Activated CD4-positive, alpha-beta T cell treated with anti-CD3 and anti-CD28 coated beads for 36 hours (primary cell): ENCODE measurements at regions of chr6 and their contacts with region 1.

Region 1: DNA sequence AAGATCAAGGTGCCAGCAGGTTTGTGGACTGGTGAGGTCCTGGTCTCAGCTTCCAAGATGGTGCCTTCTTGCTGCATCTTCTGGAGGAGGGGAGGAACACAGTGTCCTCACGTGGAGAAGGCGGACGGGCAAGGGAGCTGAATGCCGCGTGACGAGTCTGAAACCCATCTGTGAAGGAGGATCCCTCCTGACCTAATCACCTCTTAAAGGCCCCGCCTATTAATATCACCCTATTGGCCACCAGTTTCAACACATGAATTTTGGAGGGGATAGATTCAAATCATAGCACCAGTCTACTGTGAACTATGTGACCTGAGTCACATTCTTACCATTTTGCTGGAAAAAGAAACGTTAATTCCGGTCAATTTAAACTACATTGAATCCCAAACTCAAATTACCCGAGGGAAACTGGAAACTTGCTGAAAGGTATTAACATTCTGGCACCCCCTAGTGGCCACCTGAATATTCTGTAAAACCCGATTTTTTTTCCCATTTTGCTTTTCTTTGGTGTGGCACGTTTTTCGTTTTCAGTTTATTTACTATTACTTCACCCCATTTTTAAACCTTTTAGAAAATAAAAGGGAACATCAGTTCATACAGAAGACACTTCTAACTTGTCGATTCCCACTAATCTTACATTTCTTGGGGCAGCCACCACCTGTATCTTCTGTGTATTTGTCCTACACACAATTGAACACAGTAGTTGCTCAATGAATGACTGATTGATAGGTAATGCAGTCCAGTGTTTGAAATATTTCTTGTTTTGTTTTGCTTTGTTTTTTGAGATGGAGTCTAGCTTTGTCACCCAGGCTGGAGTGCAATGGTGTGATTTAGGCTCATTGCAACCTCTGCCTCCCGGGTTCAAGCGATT is 17.9 kb upstream of the CCDC170 start:
- DNase-seq: peak; percentile 65
- ATAC-seq: peak; percentile 33
- H3K4me3 Mint-ChIP-seq: no peak overlapping the region
- H3K27ac Mint-ChIP-seq: no peak overlapping the region
- H3K4me1 Mint-ChIP-seq: no peaks in the 10 kb centered on the region
- H3K27me3 Mint-ChIP-seq: no peaks in the 10 kb centered on the region

Region 2: DNA sequence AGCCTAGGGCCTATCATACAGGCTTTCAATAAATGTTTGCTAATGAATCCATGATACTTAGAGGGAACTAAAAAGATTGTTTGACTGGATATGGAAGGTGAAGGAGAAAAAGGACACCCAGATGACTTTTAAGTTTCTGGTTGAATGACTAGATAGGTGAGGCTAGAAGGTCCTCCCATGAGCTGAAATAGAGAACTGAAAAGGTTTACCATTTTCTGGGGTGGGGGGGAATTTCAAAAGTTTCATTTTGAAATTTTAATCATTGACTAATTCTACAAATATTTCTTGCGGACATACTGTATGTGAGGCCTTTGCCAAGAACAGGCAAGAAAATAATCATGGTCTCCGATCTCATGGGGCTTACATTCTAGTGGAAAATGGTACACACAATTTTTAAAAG is 66.6 kb before region 1 on chr6:
- CTCF ChIA-PET with region 1: interaction called, 3 read pairs
- POLR2A ChIA-PET with region 1: no interaction called
- intact Hi-C with region 1: loop called (anchors 1 kb)
- DNase-seq: no peak
- ATAC-seq: no peak
- H3K4me3 Mint-ChIP-seq: no peak overlapping the region
- H3K27ac Mint-ChIP-seq: peak overlapping the region; percentile 17
- H3K4me1 Mint-ChIP-seq: peaks cover 22% of the 10 kb centered on the region
- H3K27me3 Mint-ChIP-seq: no peaks in the 10 kb centered on the region

Region 3: DNA sequence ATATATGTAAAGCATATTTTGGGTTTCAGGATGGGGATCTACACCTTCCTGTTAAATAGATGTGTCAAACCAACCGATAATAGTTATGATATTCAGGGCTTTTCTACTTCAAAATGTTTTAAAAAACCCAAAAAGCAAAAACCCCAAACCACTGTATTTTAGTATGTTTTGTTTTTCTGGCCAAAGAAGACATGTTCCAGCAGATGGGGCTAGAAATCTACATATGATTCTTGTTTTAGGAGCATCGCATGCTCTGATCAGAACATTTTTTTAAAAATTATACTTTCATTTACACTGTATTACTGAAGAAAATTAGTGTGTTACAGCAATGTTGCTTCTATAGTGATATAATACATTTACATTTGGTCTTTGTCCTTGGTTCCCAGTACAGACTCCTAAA is 35.0 kb before region 1 on chr6:
- CTCF ChIA-PET with region 1: interaction called, 3 read pairs
- POLR2A ChIA-PET with region 1: no interaction called
- intact Hi-C with region 1: loop called (anchors 2 to 5 kb)
- DNase-seq: no peak
- ATAC-seq: no peak
- H3K4me3 Mint-ChIP-seq: no peak overlapping the region
- H3K27ac Mint-ChIP-seq: peak overlapping the region; percentile 12
- H3K4me1 Mint-ChIP-seq: peaks cover 26% of the 10 kb centered on the region
- H3K27me3 Mint-ChIP-seq: no peaks in the 10 kb centered on the region